Transverse colon (tissue), 4 donors: ENCODE measurements at regions of chr21 and their contacts with region 1.

Region 1: DNA sequence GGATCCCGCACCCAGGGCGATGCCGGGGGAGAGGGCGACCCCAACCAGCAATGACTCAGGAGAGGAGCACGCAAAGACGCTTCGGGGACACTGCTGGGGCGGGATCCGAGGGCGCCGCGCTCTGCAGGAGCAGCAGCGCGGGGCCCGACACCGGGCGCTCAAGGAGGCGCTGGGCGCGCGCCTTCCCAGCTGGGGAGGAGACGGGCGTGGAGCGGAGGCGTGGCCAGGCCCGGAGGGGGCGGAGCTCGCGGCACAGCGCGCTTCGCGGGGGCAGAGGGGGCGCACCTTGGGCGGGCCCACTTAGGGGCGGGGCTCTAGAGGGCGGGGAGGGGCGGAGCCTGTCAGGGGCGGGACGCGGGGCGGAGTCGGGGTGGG is 369 bp downstream of the SUMO3 start:
- DNase-seq: peak; percentile 96
- H3K4me3 ChIP-seq: peak overlapping the region; percentile 58 to 80 (median 72)
- H3K27ac ChIP-seq: peak overlapping the region; percentile 81 to 94 (median 92)
- H3K4me1 ChIP-seq: peaks cover 6 to 28% (median 16%) of the 10 kb centered on the region in 4 donors
- H3K27me3 ChIP-seq: no peaks in the 10 kb centered on the region
- CTCF ChIP-seq: no peak
- EP300 ChIP-seq: no peak
- POLR2A ChIP-seq: no peak

Region 2: DNA sequence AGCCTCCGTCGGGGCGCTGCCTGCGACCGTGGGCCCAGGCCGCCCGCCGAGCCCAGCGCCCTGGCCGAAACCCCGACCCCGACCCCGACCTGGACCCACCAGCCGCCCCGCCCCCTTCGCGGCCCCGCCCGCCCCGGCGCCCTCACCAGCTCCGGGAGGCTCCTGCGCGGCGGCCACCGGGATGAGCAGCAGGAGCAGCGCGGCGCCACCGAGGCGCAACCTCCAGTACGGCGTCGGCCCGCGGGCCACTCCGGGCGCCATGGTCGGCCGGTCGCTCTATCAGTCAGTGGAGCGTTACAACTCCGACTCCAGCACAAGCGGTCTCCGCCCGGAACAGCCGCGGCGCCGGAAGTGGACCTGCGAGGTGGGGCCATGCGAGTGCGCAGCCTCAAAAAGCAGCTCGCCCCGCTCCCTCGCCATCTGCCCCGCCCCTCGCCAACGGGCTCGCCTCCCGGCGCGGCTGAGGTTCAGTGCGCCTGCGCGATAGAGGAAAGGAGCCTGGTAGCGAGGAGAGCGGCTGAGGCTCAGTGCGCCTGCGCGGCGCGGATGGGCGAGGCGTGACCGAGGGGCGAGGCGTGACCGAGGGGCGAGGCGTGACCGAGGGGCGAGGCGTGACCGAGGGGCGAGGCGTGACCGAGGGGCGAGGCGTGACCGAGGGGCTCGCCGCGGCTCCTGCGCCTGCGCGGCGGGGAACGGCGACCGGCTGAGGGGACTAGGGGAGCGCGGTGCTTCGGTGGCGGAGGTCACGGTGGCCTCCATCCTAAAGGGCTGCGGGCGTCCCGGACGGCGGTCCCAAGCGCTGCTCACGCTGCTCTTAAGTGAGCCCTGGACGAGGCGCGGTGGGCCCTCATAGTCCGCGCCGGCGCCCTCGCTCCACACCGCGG is 56.1 kb after region 1 on chr21 and contains the start of gene PTTG1IP:
- in situ Hi-C with region 1: no loop called
- intact Hi-C with region 1: loop called (anchors 10 kb)
- DNase-seq: peak; percentile 99
- H3K4me3 ChIP-seq: peak within 1 kb of the TSS; percentile 76 to 99 (median 90)
- H3K27ac ChIP-seq: peak within 1 kb of the TSS; percentile 90 to 99 (median 96)
- H3K4me1 ChIP-seq: peaks cover 34 to 69% (median 50%) of the 10 kb centered on the region in 4 donors
- H3K27me3 ChIP-seq: no peaks in the 10 kb centered on the region
- CTCF ChIP-seq: no peak
- EP300 ChIP-seq: no peak
- POLR2A ChIP-seq: peak; percentile 91
- total RNA-seq, gene PTTG1IP: 157 to 552 (median 288) TPM

Region 3: DNA sequence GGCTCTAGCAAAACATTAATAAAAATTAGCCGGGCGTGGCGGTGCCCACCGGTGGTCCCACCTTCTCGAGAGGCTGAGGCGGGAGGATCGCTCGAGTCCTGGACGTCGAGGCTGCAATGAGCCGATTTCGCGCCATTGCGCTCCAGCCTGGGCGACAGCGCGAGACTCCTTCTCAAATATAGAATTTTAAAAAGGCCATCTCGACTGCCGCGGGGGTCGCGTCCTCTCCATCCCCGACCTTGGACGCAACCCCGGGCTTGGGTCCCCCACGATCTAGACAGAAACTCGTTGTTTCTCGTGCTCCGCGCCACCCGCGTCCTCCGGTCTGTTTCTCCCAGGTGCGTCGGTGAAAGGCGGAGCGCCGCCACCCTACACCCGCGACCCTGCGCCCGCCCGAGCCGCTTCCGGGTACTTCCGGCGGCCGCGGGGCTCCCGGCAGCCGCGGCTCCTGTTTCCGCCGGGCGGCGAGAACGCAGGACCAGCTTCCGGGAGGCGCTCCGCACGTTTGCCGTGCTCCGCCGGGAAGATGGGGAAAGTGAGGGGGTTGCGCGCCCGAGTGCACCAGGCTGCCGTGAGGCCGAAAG is 122.1 kb after region 1 on chr21 and contains the start of gene SLX9:
- in situ Hi-C with region 1: loop called in 1 of 4 experiments (anchors 25 kb)
- intact Hi-C with region 1: no loop called
- DNase-seq: peak; percentile 83
- H3K4me3 ChIP-seq: peak within 1 kb of the TSS; percentile 87 to 100 (median 99)
- H3K27ac ChIP-seq: peak within 1 kb of the TSS; percentile 77 to 85 (median 80)
- H3K4me1 ChIP-seq: peaks cover 14 to 33% (median 22%) of the 10 kb centered on the region in 4 donors
- H3K27me3 ChIP-seq: peaks cover under 1% of the 10 kb centered on the region
- CTCF ChIP-seq: no peak
- EP300 ChIP-seq: no peak
- POLR2A ChIP-seq: peak; percentile 62
- total RNA-seq, gene SLX9: 8.1 to 46.0 (median 16.6) TPM

Region 4: DNA sequence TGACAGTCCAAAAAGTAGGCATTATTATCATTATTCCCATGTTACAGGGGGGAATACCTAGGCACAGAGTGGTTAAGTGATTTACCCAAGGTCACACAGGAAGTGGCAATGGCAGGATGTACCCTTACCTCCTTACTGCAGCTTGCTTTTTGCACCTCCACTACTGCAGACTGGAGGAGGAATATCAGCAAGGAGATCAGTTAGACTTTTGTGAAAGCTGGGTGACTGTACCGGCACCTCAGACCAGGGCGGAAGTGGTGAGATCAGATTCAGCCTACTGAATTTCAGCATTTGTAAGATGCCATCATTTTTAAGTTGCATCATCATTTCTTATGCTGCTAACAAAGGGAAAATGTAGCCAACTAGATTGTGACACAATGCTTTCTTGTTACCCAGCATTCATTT is 261.4 kb after region 1 on chr21:
- in situ Hi-C with region 1: no loop called
- intact Hi-C with region 1: no loop called
- DNase-seq: peak; percentile 44
- H3K4me3 ChIP-seq: no peak overlapping the region
- H3K27ac ChIP-seq: peak overlapping the region in 3 of 4 donors; percentile 26 to 78 (median 65)
- H3K4me1 ChIP-seq: peaks cover 0 to 48% (median 29%) of the 10 kb centered on the region in 4 donors
- H3K27me3 ChIP-seq: peaks cover 14% of the 10 kb centered on the region
- CTCF ChIP-seq: no peak
- EP300 ChIP-seq: no peak
- POLR2A ChIP-seq: no peak